ENCODE measurements at regions of chr9 and their contacts with region 1.

Region 1: DNA sequence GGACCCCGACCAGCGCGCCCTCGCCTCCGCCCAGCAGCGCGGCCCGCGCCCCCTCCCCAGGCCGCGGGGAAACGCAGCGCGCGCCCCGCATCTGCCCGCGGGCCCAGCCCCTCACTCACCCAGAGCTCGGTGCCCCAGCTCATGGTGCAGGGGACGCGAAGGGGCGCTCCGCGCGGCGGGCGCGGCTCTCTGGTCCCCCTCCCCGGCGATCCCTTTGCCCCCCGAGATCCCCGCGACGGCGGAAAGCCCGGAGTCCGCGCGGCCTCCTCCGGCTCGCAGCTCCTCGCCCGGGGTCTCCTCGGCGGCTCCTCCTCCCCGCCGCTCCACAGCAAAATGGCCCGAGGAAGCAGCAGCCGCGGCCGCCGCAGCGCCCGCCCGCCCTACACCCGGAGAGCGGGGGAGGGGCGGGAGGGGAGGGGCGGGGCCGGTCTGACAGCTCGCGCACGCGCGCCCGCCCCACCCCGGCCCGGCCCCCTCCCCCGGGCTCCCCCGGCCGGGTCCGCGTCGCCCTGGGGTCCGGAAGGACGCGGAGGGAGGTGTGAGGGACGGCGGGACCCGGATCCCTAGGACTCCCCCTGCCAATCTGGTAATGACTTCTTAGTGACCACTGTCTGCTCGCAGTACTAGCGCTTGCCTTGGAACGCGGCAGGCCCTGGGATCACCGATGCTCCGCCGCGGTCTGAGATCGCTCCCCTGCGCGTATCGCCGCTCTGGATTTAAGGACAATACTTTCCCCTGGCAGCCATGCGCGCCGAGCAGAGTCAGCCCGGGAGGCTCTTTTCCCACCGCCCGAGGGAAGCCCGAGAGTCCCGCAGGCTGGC is at the start of gene FNBP1:
- DNase-seq: peak; percentile 85
- H3K4me3 Mint-ChIP-seq: peak within 1 kb of the TSS; percentile 90
- H3K27ac Mint-ChIP-seq: peak within 1 kb of the TSS; percentile 91
- H3K4me1 Mint-ChIP-seq: peaks cover 47% of the 10 kb centered on the region
- H3K27me3 Mint-ChIP-seq: no peaks in the 10 kb centered on the region
- total RNA-seq, gene FNBP1: 208 to 213 TPM

Region 2: GRCh38 chr9:129610473-129611301 is 432.4 kb before region 1 on chr9:
- CTCF ChIA-PET with region 1: no interaction called
- POLR2A ChIA-PET with region 1: no interaction called
- DNase-seq: peak; percentile 74
- H3K4me3 Mint-ChIP-seq: peak overlapping the region; percentile 64
- H3K27ac Mint-ChIP-seq: peak overlapping the region; percentile 40
- H3K4me1 Mint-ChIP-seq: peaks cover 42% of the 10 kb centered on the region
- H3K27me3 Mint-ChIP-seq: no peaks in the 10 kb centered on the region

Region 3: DNA sequence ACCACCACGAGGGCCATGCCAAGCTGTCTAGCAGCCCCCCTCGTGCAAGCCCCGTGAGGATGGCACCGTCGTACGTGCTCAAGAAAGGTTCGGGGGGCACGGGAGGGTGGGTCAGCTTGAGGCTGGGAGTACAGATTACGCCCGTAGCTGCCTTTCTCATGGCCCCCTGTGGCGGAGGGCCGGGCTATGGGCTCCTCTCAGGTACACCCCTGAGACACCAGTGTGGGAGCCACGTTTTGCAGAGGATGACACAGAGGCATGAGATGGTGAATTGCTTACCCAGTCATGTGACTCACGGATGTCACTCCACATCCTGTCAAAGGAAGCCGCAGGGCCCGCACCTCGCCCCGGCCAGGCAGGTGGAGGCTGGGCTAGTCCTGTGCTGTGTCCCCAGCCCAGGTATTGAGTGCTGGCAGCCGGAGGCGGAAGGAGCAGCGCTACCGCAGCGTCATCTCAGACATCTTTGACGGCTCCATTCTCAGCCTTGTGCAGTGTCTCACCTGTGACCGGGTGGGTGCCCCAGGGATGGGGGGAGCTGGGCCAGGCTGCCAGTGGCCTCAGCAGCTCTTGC is 174.0 kb before region 1 on chr9:
- CTCF ChIA-PET with region 1: interaction called, 3 read pairs
- POLR2A ChIA-PET with region 1: interaction called, 11 read pairs
- DNase-seq: peak; percentile 96
- H3K4me3 Mint-ChIP-seq: peak overlapping the region; percentile 62
- H3K27ac Mint-ChIP-seq: peak overlapping the region; percentile 89
- H3K4me1 Mint-ChIP-seq: peaks cover 84% of the 10 kb centered on the region
- H3K27me3 Mint-ChIP-seq: no peaks in the 10 kb centered on the region

Region 4: GRCh38 chr9:129944506-129945116 is 98.4 kb before region 1 on chr9:
- CTCF ChIA-PET with region 1: no interaction called
- POLR2A ChIA-PET with region 1: interaction called, 20 read pairs
- DNase-seq: peak; percentile 76
- H3K4me3 Mint-ChIP-seq: peak overlapping the region; percentile 1
- H3K27ac Mint-ChIP-seq: peak overlapping the region; percentile 80
- H3K4me1 Mint-ChIP-seq: peaks cover 49% of the 10 kb centered on the region
- H3K27me3 Mint-ChIP-seq: no peaks in the 10 kb centered on the region

Region 5: GRCh38 chr9:129988607-129989361 is 54.3 kb before region 1 on chr9:
- CTCF ChIA-PET with region 1: interaction called, 4 read pairs
- POLR2A ChIA-PET with region 1: interaction called, 97 read pairs
- DNase-seq: no peak
- H3K4me3 Mint-ChIP-seq: no peak overlapping the region
- H3K27ac Mint-ChIP-seq: peak overlapping the region; percentile 72
- H3K4me1 Mint-ChIP-seq: peaks cover 75% of the 10 kb centered on the region
- H3K27me3 Mint-ChIP-seq: no peaks in the 10 kb centered on the region

Region 6: GRCh38 chr9:130001190-130001589 is 41.9 kb before region 1 on chr9:
- CTCF ChIA-PET with region 1: interaction called, 12 read pairs
- POLR2A ChIA-PET with region 1: interaction called, 97 read pairs
- DNase-seq: no peak
- H3K4me3 Mint-ChIP-seq: no peak overlapping the region
- H3K27ac Mint-ChIP-seq: peak overlapping the region; percentile 54
- H3K4me1 Mint-ChIP-seq: peaks cover 77% of the 10 kb centered on the region
- H3K27me3 Mint-ChIP-seq: no peaks in the 10 kb centered on the region

Region 7: GRCh38 chr9:130018260-130018659 is 24.8 kb before region 1 on chr9:
- CTCF ChIA-PET with region 1: interaction called, 8 read pairs
- POLR2A ChIA-PET with region 1: interaction called, 17 read pairs
- DNase-seq: no peak
- H3K4me3 Mint-ChIP-seq: no peak overlapping the region
- H3K27ac Mint-ChIP-seq: peak overlapping the region; percentile 54
- H3K4me1 Mint-ChIP-seq: peaks cover 67% of the 10 kb centered on the region
- H3K27me3 Mint-ChIP-seq: no peaks in the 10 kb centered on the region

Region 8: DNA sequence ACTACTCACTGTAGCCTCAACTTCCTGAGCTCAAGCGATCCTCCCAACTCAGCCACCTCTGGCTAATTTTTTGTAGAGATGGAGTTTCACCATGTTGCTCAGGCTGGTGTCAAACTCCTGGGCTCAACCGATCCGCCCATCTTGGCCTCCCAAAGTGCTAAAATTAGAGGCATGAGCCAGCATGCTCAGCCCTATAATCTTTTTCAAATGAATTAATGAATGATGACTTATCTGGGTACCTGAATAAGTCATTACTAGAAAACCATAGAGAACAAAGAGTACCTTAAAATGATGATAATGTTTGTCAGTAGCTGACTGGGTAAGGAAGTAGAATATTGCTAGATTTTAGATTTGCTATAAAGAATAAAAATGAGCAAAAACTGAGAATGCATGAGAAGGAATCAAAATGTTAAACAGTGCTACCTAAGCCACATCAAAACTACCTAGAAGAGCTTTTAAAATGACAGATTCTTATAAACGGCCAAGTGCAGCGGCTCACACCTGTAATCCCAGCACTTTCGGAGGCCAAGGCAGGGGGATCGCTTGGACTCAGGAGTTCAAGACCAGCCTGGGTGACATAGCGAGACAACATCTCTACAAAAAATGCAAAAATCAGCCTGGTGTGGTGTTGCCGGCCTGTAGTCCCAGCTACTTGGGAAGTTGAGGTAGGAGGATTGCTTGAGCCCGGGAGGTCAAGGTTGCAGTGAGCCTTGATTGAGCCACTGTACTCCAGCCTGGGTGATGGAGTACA is 13.6 kb before region 1 on chr9:
- CTCF ChIA-PET with region 1: interaction called, 22 read pairs
- POLR2A ChIA-PET with region 1: interaction called, 119 read pairs
- DNase-seq: peak; percentile 53
- H3K4me3 Mint-ChIP-seq: peak overlapping the region; percentile 39
- H3K27ac Mint-ChIP-seq: peak overlapping the region; percentile 88
- H3K4me1 Mint-ChIP-seq: peaks cover 90% of the 10 kb centered on the region
- H3K27me3 Mint-ChIP-seq: no peaks in the 10 kb centered on the region

Region 9: DNA sequence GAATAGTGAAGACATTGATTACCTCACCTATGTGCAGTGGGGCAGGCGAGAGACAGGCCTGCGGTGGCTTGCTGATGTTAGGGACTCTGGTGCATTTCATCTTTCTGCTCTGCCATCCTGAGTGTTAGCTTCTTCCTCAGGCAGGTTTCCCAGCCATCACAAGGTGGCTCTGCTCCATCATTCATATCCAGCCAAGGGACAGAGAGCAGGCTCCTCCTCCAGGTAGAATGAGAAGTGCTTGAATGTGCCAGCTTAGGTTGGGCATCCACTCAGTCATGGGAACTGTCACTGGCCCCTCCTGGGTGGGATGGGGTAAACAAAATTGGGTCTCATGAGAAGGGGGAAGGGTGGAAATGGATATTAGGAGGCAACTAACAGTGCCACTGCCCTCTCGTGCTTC is 35.5 kb after region 1 on chr9:
- CTCF ChIA-PET with region 1: no interaction called
- POLR2A ChIA-PET with region 1: no interaction called
- DNase-seq: no peak
- H3K4me3 Mint-ChIP-seq: no peak overlapping the region
- H3K27ac Mint-ChIP-seq: no peak overlapping the region
- H3K4me1 Mint-ChIP-seq: peaks cover 10% of the 10 kb centered on the region
- H3K27me3 Mint-ChIP-seq: no peaks in the 10 kb centered on the region

Region 10: DNA sequence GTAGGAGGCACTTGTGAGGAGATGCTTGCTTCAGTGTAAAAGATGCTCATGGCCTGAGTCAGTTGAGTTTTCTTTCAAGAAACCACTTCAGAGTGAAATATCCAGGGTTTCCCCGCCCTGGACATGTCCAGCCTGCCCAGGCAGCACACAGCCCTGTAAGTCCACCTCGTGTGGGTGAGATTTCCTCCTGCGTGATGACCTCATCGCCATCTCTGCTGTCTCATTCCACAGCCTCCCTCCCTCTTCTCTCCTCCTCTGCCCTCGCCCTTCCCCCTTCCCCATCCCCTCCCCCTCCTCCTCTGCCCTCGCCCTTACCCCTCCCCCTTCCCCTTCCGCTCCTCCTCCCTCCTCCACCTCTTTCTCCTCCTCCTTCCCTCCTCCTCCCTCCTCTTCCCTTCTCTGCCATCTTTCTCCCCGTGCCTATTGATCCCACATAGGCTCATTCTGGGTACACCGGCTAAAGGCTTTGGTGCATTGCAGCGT is 95.2 kb after region 1 on chr9:
- CTCF ChIA-PET with region 1: no interaction called
- POLR2A ChIA-PET with region 1: no interaction called
- DNase-seq: no peak
- H3K4me3 Mint-ChIP-seq: no peak overlapping the region
- H3K27ac Mint-ChIP-seq: no peak overlapping the region
- H3K4me1 Mint-ChIP-seq: peaks cover 39% of the 10 kb centered on the region
- H3K27me3 Mint-ChIP-seq: peaks cover under 1% of the 10 kb centered on the region